ACHN (cell line): ENCODE measurements at regions of chr12 and their contacts with region 1.

Region 1: DNA sequence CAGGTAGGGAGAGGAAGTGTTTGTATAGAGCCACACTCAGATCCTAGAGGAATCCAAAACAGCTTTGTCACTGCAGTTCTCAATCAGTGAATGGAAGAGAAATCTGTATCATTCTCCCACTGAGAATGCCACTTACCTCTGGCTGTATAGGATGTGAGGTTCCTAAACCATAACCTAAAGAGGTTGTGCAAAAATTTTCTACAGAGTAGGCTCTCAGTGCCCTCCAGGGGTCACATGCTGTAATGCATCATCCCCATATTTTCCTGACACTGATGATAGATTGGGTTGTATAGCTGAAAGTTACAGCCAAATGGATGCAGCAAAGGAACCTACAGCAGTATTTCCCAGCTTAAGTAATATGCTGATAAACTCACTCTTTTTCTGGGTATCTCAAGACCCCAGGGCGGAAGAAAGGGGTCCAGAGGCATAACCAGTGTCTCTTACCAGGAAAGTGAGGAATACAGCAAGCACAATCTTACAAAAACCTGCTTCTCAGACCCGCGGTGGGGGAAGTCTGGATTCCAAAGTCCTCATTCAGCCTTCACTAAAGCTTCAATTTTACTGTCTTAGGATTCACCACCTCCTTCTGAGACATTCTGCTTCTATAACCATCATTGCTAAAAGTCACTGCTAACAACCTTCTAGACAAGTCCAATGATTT is 3.8 kb downstream of the BCDIN3D start:
- DNase-seq: peak; percentile 64

Region 2: DNA sequence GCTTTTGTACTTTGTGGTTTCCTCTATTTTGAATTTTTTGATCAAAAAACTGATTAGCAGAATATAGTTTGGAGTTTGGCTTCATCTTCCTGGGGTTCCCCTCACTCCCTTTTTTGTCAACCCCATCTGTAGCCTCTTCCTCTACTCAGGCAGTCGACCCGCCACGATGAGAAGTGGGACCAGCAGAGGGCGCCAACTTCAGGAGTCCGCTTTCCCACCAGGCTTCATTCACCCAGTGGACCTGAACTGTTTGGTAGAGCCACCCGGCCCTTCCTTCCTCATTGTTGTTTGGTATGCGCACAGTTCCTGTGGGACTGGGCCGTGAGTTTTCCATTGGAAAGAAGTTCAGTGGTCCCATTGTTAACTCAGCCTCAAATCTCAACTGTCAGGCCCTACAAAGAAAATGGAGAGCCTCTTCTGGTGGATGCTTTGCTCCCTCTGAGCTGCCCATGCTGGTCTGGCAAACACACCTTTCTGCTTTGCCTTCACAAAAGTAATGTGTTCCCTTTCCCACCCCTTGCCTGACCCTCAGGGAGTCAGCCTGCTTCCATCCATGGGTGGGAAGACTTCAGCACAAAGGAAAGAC is 76.0 kb before region 1 on chr12:
- in situ Hi-C with region 1: loop called (anchors 10 kb)
- DNase-seq: peak; percentile 66